CD4-positive, alpha-beta T cell (primary cell): ENCODE measurements at regions of chr6 and their contacts with region 1.

Region 1: GRCh38 chr6:110873981-110874879 is at the start of gene AMD1:
- DNase-seq: peak; percentile 91 to 98 (median 94)
- ATAC-seq: peak; percentile 75
- H3K4me3 ChIP-seq: peak within 1 kb of the TSS; percentile 78
- H3K4me3 Mint-ChIP-seq: peak within 1 kb of the TSS; percentile 96
- H3K27ac ChIP-seq: peak within 1 kb of the TSS; percentile 82 to 91
- H3K27ac Mint-ChIP-seq: peak within 1 kb of the TSS; percentile 99
- H3K4me1 ChIP-seq: peaks cover 17% of the 10 kb centered on the region
- H3K4me1 Mint-ChIP-seq: peaks cover 37% of the 10 kb centered on the region
- H3K27me3 ChIP-seq: no peaks in the 10 kb centered on the region
- H3K27me3 Mint-ChIP-seq: no peaks in the 10 kb centered on the region
- CTCF ChIP-seq: no peak
- total RNA-seq, gene AMD1: 165 to 174 TPM

Region 2: GRCh38 chr6:110285306-110286060 is 588.7 kb before region 1 on chr6:
- CTCF ChIA-PET with region 1: no interaction called
- POLR2A ChIA-PET with region 1: no interaction called
- intact Hi-C with region 1: no loop called
- DNase-seq: no peak
- ATAC-seq: no peak
- H3K4me3 ChIP-seq: no peak overlapping the region
- H3K4me3 Mint-ChIP-seq: no peak overlapping the region
- H3K27ac ChIP-seq: no peak overlapping the region
- H3K27ac Mint-ChIP-seq: no peak overlapping the region
- H3K4me1 ChIP-seq: no peaks in the 10 kb centered on the region
- H3K4me1 Mint-ChIP-seq: no peaks in the 10 kb centered on the region
- H3K27me3 ChIP-seq: peaks cover 0 to 8% of the 10 kb centered on the region in 2 experiments
- H3K27me3 Mint-ChIP-seq: peaks cover 4% of the 10 kb centered on the region
- CTCF ChIP-seq: no peak

Region 3: DNA sequence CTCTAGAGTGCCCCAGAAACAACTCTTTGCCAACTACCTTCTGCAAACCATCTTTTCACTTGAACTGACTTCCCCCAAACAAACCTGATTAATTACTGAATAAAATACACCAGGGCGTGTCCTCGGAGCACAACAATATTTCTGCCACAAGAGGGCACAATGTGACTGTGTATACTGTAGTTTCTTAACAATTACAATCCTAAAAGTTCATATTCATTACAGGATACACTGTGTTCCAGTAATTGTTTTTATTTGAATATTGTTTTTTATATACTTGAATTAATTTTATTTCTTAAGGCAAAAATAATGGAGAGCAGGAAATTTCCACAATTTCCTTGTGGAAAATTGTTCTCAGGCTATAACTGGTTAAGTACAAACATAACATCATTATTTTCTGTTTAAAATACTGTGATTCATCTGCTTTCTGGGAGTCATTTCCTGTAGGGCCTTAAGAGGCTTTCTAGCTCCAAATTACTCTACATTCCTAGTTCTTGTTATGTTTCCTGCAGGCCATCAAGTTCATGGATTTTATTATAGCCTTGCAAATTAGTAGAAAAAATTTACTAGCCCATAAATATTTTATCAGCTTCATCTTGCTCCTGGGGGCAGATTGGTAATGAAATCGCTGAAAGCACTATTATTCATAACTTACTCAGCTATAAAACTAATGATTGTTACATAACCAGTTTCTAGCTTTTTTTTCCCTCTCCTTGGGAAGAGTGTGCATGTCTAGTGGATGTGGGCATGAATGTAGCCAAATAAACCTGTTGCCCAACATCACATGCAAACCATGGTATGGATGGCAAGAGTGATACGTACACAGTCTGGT is 345.9 kb before region 1 on chr6:
- CTCF ChIA-PET with region 1: no interaction called
- POLR2A ChIA-PET with region 1: no interaction called
- intact Hi-C with region 1: loop called in 1 of 2 experiments (anchors 5 kb)
- DNase-seq: peak in 13 of 14 experiments; percentile 8 to 78 (median 25)
- ATAC-seq: peak; percentile 70
- H3K4me3 ChIP-seq: no peak overlapping the region
- H3K4me3 Mint-ChIP-seq: no peak overlapping the region
- H3K27ac ChIP-seq: no peak overlapping the region
- H3K27ac Mint-ChIP-seq: no peak overlapping the region
- H3K4me1 ChIP-seq: no peaks in the 10 kb centered on the region
- H3K4me1 Mint-ChIP-seq: no peaks in the 10 kb centered on the region
- H3K27me3 ChIP-seq: no peaks in the 10 kb centered on the region
- H3K27me3 Mint-ChIP-seq: no peaks in the 10 kb centered on the region
- CTCF ChIP-seq: peak; percentile 84

Region 4: DNA sequence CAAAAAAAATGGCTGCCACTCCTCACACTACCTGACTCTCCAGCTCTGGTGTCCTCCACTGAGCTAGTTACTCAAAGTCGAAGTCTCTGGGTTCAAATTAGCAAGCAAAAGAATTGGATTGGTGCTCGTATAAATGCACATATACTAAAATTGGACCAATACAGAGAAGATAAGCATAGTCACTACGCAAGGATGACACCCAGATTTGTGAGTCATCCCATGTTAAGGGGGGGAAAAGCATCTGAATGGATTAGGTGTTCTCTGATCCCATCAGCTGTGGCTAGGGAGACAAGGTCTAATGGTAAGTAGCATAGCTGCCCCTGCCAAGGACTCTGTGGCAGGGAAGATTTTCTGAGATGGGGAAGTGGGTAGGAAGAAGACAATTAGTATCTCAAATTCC is 17.9 kb before region 1 on chr6:
- CTCF ChIA-PET with region 1: no interaction called
- POLR2A ChIA-PET with region 1: interaction called, 15 read pairs
- intact Hi-C with region 1: no loop called
- DNase-seq: no peak
- ATAC-seq: no peak
- H3K4me3 ChIP-seq: no peak overlapping the region
- H3K4me3 Mint-ChIP-seq: no peak overlapping the region
- H3K27ac ChIP-seq: no peak overlapping the region
- H3K27ac Mint-ChIP-seq: no peak overlapping the region
- H3K4me1 ChIP-seq: peaks cover 13% of the 10 kb centered on the region
- H3K4me1 Mint-ChIP-seq: peaks cover 6% of the 10 kb centered on the region
- H3K27me3 ChIP-seq: no peaks in the 10 kb centered on the region
- H3K27me3 Mint-ChIP-seq: no peaks in the 10 kb centered on the region
- CTCF ChIP-seq: no peak

Region 5: DNA sequence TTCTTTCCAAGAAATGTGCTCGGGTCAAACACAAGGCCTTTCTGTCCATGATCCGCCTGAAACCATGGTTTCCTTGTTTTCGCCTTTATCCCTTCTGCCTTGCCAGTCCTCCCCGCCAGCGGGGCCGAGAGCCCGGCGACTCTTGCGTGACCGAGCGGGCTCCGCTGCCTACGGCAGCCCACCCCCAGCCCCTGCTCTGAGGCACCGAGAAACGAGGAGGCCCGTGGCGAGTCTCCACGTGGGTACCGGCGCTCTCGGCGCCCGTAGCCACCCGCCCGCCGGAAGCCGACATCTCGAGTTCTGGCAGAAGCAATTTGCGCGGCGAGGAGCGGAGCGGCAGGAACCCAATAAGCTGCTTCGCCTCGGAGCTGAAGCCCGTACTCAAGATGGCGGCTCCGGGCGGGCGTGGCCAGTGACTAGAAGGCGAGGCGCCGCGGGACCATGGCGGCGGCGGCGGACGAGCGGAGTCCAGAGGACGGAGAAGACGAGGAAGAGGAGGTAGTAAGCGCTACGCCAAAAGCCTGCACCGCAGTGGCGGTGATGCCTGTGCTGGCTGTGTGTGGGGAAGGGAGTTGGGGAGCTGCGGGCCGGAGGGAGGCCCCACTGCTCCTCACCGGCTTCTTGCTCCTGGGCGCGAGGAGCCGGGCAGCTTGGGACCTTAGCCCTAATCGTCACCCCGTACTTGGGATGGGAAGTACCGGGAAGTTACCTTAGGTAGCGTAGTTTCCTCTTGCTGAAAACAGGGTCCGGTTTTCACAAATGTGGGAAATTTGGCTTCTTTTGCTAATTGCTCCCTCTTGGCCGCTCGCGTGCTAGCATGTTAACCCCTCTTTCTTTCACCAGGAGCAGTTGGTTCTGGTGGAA is 84.3 kb after region 1 on chr6 and contains the start of gene GTF3C6:
- CTCF ChIA-PET with region 1: no interaction called
- POLR2A ChIA-PET with region 1: interaction called, 130 read pairs
- intact Hi-C with region 1: loop called (anchors 2 to 5 kb)
- DNase-seq: peak; percentile 85 to 96 (median 90)
- ATAC-seq: peak; percentile 99
- H3K4me3 ChIP-seq: peak within 1 kb of the TSS; percentile 99
- H3K4me3 Mint-ChIP-seq: peak within 1 kb of the TSS; percentile 99
- H3K27ac ChIP-seq: peak within 1 kb of the TSS; percentile 84 to 90
- H3K27ac Mint-ChIP-seq: peak within 1 kb of the TSS; percentile 89
- H3K4me1 ChIP-seq: peaks cover 17% of the 10 kb centered on the region
- H3K4me1 Mint-ChIP-seq: peaks cover 25% of the 10 kb centered on the region
- H3K27me3 ChIP-seq: no peaks in the 10 kb centered on the region
- H3K27me3 Mint-ChIP-seq: peaks cover 2% of the 10 kb centered on the region
- CTCF ChIP-seq: no peak
- total RNA-seq, gene GTF3C6: 17.9 to 19.2 TPM

Region 6: GRCh38 chr6:111259089-111259831 is 385.0 kb after region 1 on chr6:
- CTCF ChIA-PET with region 1: interaction called, 3 read pairs
- POLR2A ChIA-PET with region 1: interaction called, 11 read pairs
- intact Hi-C with region 1: no loop called
- DNase-seq: peak; percentile 98 to 100 (median 99)
- ATAC-seq: peak; percentile 95
- H3K4me3 ChIP-seq: peak overlapping the region; percentile 60
- H3K4me3 Mint-ChIP-seq: peak overlapping the region; percentile 90
- H3K27ac ChIP-seq: peak overlapping the region; percentile 78 to 89
- H3K27ac Mint-ChIP-seq: peak overlapping the region; percentile 87
- H3K4me1 ChIP-seq: peaks cover 28% of the 10 kb centered on the region
- H3K4me1 Mint-ChIP-seq: peaks cover 35% of the 10 kb centered on the region
- H3K27me3 ChIP-seq: no peaks in the 10 kb centered on the region
- H3K27me3 Mint-ChIP-seq: no peaks in the 10 kb centered on the region
- CTCF ChIP-seq: peak; percentile 96

Region 7: GRCh38 chr6:112087136-112087911 is 1213.1 kb after region 1 on chr6 and contains the starts of genes FAM229B and TUBE1:
- CTCF ChIA-PET with region 1: no interaction called
- POLR2A ChIA-PET with region 1: interaction called, 4 read pairs
- intact Hi-C with region 1: loop called in 1 of 2 experiments (anchors 5 kb)
- DNase-seq: peak; percentile 81 to 98 (median 84)
- ATAC-seq: peak; percentile 97
- H3K4me3 ChIP-seq: peak within 1 kb of the TSS; percentile 88
- H3K4me3 Mint-ChIP-seq: no peak within 1 kb of the TSS
- H3K27ac ChIP-seq: peak within 1 kb of the TSS; percentile 60 to 84
- H3K27ac Mint-ChIP-seq: no peak within 1 kb of the TSS
- H3K4me1 ChIP-seq: peaks cover 3% of the 10 kb centered on the region
- H3K4me1 Mint-ChIP-seq: peaks cover 11% of the 10 kb centered on the region
- H3K27me3 ChIP-seq: peaks cover 0 to 6% of the 10 kb centered on the region in 2 experiments
- H3K27me3 Mint-ChIP-seq: peaks cover 28% of the 10 kb centered on the region
- CTCF ChIP-seq: no peak
- total RNA-seq, gene FAM229B: 3.6 to 4.4 TPM
- total RNA-seq, gene TUBE1: 28.2 to 30.8 TPM

Region 8: GRCh38 chr6:112429226-112429625 is 1555.0 kb after region 1 on chr6:
- CTCF ChIA-PET with region 1: no interaction called
- POLR2A ChIA-PET with region 1: no interaction called
- intact Hi-C with region 1: no loop called
- DNase-seq: no peak
- ATAC-seq: no peak
- H3K4me3 ChIP-seq: no peak overlapping the region
- H3K4me3 Mint-ChIP-seq: no peak overlapping the region
- H3K27ac ChIP-seq: no peak overlapping the region
- H3K27ac Mint-ChIP-seq: no peak overlapping the region
- H3K4me1 ChIP-seq: no peaks in the 10 kb centered on the region
- H3K4me1 Mint-ChIP-seq: no peaks in the 10 kb centered on the region
- H3K27me3 ChIP-seq: no peaks in the 10 kb centered on the region
- H3K27me3 Mint-ChIP-seq: peaks cover 8% of the 10 kb centered on the region
- CTCF ChIP-seq: no peak